G401 (cell line): ENCODE measurements at regions of chr11 and their contacts with region 1.

Region 1: DNA sequence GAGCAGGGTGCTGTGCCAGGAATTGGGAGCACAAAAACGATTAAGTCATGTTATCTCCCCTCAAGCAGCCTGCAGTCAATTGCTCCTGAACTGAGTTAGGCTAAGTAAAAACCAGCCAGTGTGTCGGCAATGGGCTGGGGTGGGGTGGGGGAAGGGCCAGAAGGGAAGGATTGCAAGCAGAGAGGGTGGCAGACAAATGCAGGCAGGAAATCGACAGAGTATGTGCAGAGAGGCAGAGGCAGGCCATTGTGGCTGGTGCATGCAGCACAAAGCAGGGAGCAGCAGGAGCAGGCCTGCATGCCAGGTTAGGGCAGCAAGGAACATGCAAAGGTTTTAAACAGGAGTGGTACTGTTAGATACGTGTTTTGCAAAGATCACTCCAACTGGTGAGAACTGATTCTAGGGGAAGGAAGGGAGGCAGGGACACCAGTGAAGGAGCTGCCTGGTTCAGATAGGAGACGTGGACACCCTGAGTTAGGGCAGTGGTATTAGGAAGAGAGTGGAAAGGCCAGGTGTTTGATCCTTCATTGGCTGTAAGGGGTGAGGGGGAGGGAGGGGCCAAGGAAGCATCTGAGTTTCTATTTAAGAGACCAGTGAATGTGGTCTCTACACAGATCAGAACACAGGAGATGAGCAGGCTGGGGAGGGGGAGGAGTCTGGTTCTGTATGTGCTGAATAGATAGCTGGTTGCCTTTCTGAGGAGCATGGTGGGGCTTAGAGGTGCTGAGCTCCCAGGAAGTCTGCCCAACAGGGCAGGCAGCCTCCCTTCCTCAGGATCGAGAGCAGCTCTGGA is 70.8 kb upstream of the PHOX2A start:
- DNase-seq: no peak

Region 2: DNA sequence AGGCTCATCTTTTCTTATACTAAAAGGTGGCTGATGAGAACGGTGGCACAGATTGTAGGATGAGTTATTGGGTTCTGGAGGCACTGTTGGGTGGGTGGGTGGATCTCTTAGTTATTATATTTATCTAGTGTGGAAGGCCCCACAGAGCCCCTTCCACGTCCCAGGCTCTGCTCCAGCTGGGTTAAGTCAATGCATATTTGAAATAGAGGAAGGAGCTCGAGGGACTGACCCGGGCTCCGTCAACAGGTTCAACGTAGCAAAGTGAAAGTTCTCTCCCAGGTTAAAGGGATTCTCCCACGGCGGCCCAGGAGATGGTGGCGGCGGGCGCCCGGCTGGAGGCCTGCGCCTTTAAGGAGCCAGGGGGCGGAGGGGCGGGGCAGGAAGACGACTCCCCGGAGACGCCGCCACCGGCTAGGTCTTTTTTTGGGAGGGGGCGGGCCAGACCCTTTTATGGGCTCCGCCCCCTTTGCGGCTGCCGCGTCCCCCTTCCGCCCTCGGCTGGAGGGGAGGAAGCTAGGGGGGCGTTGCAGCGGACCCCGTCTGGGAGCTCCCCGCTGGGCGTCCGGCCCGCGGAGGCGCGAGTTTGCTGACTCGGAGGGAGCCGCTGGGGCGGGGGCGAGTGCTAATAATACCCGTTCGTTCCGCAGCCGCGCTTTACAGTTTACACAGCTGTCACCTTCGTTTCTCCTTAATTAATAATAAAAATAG is 91.7 kb before region 1 on chr11:
- in situ Hi-C with region 1: no loop called
- DNase-seq: peak; percentile 65

Region 3: DNA sequence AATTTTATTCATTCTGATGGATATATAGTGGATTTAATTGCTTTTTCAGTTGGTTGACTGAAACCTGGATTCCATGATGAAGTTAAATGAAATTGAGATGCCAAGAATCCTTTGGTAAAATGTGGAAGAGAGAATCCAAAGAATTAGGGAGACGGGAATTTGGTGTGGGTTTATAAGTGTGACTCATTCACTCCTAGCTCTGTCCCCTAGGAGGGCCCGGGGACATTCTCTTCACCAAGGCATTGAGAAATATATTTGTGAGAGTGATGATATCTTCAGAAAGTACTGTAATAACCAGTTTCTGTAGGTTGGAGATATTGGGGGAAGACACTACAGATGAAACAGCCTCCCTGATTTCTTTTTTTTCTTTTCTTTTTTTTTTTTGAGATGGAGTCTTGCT is 57.2 kb before region 1 on chr11:
- in situ Hi-C with region 1: no loop called
- DNase-seq: no peak

Region 4: DNA sequence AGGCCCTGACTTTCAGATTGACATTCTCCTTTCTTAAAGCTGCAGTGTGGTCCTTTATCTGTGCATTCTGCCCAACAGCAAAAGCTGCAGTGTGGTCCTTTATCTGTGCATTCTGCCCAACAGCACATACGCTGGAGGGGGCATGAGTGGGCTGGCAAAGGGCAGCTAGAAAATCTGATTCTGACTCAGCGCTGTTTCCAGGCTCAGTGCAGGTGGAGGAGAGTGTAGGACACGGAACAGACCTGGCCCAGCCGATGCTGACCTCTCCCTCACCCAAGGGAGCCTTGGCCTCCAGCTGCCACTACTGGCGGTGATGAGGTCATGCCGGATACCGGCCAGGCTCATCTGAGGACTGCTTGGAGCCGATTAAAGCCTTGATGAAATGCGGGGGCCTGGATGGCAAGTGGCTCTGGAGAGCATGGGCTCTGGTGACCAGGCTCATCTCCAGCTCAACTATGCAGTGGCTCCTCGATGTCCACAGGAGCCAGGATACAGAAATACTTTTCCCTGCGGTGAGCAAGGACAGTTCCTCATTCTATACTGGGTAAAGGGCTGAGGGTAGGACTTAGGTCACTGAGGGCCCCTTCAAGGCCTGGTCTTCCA is 34.9 kb after region 1 on chr11:
- in situ Hi-C with region 1: loop called (anchors 5 kb)
- DNase-seq: peak; percentile 64

Region 5: GRCh38 chr11:72430741-72431570 is 116.2 kb after region 1 on chr11:
- in situ Hi-C with region 1: no loop called
- DNase-seq: peak; percentile 84

Region 6: GRCh38 chr11:72478659-72479058 is 163.9 kb after region 1 on chr11:
- in situ Hi-C with region 1: no loop called
- DNase-seq: no peak